ENCODE measurements at regions of chrX and their contacts with region 1.

Region 1: DNA sequence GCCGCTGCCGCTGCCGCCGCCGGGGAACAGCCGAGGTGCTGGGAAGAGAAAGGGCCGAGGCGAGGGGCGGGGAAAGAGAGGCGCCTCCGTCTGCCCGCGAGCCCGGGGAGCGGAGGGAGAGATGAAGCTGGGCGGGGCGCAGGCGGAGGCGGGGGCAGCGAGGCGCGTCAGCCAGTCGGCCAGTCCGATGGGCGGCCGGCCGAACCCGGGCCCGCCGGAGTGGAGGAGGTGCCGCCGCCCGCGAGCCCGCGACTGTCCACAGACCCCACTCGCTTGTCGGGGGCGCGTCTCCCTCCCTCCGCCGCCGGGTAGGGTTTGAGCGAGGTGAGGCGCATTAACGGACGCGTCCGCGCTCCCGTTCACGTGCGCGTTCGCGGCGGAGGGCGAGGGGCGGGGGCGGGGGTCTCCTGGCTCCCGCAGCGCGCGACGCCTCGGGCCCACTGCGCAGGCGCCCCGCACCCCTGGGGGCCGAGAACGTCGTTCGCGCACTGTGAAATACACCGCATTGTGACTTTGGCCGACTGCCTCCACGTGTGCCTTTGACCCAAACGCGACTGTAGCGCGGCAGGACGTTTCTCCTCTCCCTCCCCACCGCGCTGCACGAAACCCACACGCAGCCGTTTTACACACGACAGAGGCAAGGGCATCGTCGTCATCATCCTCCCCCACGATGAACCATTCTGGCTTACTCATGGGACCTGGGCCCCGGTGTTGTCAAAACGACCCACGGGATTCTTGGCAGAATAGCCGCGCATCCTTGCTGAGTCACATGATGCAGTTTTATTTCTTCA is at the start of gene NUDT11:
- DNase-seq: peak; percentile 79 to 94
- H3K4me3 ChIP-seq: peak within 1 kb of the TSS; percentile 51
- H3K4me1 ChIP-seq: peaks cover 15% of the 10 kb centered on the region
- H3K27me3 ChIP-seq: no peaks in the 10 kb centered on the region

Region 2: DNA sequence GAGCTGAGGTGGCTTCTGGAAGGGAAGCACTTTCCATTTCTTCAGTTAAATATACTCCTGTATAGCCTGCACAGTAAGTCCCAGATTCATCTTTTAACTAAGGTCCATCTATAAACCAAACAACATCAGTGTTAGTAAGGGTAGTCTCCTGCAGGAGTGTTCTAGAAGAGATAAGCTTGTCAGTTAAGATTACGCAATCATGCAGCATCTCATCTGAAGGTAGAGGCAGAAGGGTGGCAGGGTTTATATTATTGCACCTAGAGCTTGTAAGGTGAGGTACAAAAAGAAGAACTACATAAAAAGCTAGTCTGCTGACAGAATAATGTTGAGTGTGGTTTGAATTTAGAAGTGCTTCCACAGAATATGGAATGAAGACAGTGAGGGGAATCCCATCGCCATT is 120.0 kb before region 1 on chrX:
- in situ Hi-C with region 1: no loop called
- DNase-seq: no peak
- H3K4me3 ChIP-seq: no peak overlapping the region
- H3K4me1 ChIP-seq: no peaks in the 10 kb centered on the region
- H3K27me3 ChIP-seq: peaks cover 9% of the 10 kb centered on the region

Region 3: GRCh38 chrX:51614353-51615012 is 117.8 kb after region 1 on chrX:
- in situ Hi-C with region 1: loop called (anchors 25 kb)
- DNase-seq: peak; percentile 16 to 58
- H3K4me3 ChIP-seq: no peak overlapping the region
- H3K4me1 ChIP-seq: no peaks in the 10 kb centered on the region; the same call in 1 of the 2 replicates
- H3K27me3 ChIP-seq: peaks cover 11% of the 10 kb centered on the region

Measured in HAP-1 (cell line).